SK-N-SH (cell line): ENCODE measurements at regions of chr14 and their contacts with region 1.

Region 1: DNA sequence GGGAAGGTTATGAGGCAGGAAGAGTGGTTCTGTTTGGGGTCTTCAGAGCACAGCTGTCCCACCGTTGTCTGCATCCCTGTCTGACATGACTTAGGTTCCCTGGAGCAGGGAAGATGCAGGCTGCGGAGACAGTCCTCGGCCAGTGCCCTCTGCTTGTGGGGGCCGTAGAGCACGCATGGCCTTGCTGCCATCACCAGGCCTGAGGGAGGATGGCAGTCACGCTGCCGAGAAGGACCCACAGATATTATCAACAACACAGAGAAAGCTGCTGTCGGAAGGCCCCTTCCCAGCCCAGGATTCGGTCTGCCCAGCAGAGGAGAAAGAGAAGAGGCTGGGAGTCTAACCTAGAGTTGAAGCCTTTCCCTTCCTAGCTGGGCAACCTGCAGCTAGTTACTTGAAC is 35.0 kb downstream of the ERH start:
- DNase-seq: peak; percentile 78
- H3K4me3 ChIP-seq: no peak overlapping the region
- H3K27ac ChIP-seq: no peak overlapping the region
- H3K4me1 ChIP-seq: peaks cover 0 to 7% of the 10 kb centered on the region in 2 experiments; a peak in 1 of 4 replicates
- H3K27me3 ChIP-seq: no peaks in the 10 kb centered on the region
- CTCF ChIP-seq: peak; percentile 54
- EP300 ChIP-seq: no peak
- RAD21 ChIP-seq: peak; percentile 84

Region 2: DNA sequence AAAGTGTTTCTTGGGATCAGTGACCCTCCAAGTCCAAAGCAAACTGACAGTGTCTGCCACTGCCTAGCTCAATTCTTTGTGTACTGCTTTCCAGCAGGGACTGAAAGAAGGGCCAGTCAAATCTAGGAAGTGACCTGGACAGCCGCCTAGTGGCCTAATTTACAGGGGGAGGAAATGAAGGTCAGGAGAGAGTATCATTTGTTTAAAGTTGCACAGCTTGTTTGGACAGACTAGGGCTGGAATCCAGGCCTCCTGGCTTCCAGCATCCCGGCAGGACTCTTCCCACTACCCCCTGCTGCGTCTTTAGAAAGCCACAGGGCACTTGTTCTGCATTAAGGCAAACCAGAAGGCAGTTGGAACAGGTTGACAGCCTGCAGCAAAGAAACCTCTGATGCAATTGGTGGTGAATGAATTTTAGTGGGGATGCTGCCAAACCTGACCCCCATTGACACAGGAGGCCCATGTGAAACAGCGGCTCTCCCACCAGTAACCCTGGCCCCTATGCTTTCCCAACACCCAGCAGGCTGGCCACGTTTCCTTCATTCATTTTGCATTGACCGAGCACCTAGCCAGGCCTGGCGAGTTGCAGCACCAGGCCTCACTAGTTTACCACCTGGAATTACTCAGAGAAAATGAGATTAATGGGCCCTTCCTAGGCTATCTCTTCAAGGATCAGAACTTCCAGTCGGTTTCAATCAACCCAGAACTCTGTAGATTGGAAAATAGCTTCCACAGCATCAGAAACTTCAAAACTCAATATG is 74.9 kb before region 1 on chr14:
- CTCF ChIA-PET with region 1: interaction called, 10 read pairs
- POLR2A ChIA-PET with region 1: no interaction called
- DNase-seq: peak; percentile 50
- H3K4me3 ChIP-seq: no peak overlapping the region
- H3K27ac ChIP-seq: peak overlapping the region in 1 of 2 experiments; percentile 54; a peak in 2 of 4 replicates
- H3K4me1 ChIP-seq: peaks cover 0 to 27% of the 10 kb centered on the region in 2 experiments; a peak in 2 of 4 replicates
- H3K27me3 ChIP-seq: no peaks in the 10 kb centered on the region
- CTCF ChIP-seq: peak; percentile 56
- EP300 ChIP-seq: peak in 1 of 2 experiments; percentile 32; a peak in 1 of 4 replicates
- RAD21 ChIP-seq: peak; percentile 46

Region 3: GRCh38 chr14:69346710-69347109 is 16.3 kb before region 1 on chr14:
- CTCF ChIA-PET with region 1: interaction called, 13 read pairs
- POLR2A ChIA-PET with region 1: interaction called, 3 read pairs
- DNase-seq: peak; percentile 56
- H3K4me3 ChIP-seq: no peak overlapping the region
- H3K27ac ChIP-seq: no peak overlapping the region
- H3K4me1 ChIP-seq: peaks cover 0 to 2% of the 10 kb centered on the region in 2 experiments; a peak in 1 of 4 replicates
- H3K27me3 ChIP-seq: no peaks in the 10 kb centered on the region
- CTCF ChIP-seq: peak; percentile 53
- EP300 ChIP-seq: no peak
- RAD21 ChIP-seq: peak; percentile 39; the same call in 1 of the 2 replicates

Region 4: DNA sequence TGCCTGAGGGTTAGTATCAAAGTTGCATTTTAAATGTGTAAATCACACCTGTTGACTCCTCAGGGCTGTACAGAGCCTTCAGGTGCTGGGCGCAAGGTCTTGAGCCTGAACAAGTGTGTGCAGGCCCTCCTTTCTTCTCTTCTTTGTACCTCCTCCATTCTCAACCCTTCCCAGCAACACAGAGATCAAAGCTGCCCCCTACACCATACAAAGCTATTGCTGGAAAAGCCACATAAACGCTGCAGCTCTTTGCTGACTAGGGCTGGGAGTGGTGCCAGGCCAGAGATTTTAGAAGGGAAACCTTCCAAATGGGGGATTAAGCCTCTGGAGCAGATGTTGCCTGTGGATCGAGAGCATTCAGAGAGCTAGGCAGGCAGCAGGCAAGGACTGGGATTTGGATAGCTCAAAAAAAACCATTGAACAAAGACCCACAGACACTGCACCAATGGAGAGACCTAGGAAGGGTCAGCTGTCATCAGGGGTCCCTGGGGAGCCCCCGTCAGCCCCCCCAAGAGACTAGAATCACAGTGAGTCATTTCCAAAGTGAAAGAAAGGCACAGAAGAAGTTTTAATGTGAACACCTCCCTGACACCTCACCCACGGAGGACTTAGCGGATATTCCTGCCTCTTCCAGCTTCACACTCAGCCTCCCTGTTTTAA is 230.1 kb after region 1 on chr14:
- CTCF ChIA-PET with region 1: no interaction called
- POLR2A ChIA-PET with region 1: no interaction called
- DNase-seq: no peak
- H3K4me3 ChIP-seq: no peak overlapping the region
- H3K27ac ChIP-seq: no peak overlapping the region
- H3K4me1 ChIP-seq: peaks cover 0 to 3% of the 10 kb centered on the region in 2 experiments; a peak in 2 of 4 replicates
- H3K27me3 ChIP-seq: no peaks in the 10 kb centered on the region
- CTCF ChIP-seq: no peak
- EP300 ChIP-seq: no peak
- RAD21 ChIP-seq: no peak

Region 5: GRCh38 chr14:69685716-69686115 is 322.7 kb after region 1 on chr14:
- CTCF ChIA-PET with region 1: no interaction called
- POLR2A ChIA-PET with region 1: no interaction called
- DNase-seq: no peak
- H3K4me3 ChIP-seq: no peak overlapping the region
- H3K27ac ChIP-seq: no peak overlapping the region
- H3K4me1 ChIP-seq: peaks cover 0 to 40% of the 10 kb centered on the region in 2 experiments; a peak in 3 of 4 replicates
- H3K27me3 ChIP-seq: no peaks in the 10 kb centered on the region
- CTCF ChIP-seq: no peak
- EP300 ChIP-seq: no peak
- RAD21 ChIP-seq: 0 out of 2 replicates have a peak, but pooled peaks have one; percentile 7

Region 6: DNA sequence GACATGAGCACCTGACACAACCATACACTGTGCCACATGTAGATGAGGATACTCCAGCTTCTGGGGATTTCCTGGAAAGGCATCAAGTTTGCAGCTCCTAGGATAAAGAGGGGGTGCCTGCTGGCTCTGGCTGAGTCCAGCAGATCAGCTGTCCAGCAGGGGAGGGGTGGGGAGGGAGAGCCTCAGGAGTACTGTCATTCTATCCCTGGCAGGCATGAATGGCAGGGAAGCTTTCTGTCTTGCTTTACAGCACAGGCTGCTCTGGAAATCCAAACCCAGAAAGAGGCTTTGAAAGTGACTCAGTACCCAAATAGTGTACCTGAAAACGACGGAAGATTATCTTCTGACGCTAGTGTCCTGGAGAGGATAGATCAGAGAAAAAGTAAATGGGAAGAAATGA is 793.5 kb after region 1 on chr14:
- CTCF ChIA-PET with region 1: no interaction called
- POLR2A ChIA-PET with region 1: no interaction called
- DNase-seq: no peak
- H3K4me3 ChIP-seq: no peak overlapping the region
- H3K27ac ChIP-seq: peak overlapping the region in 1 of 2 experiments; percentile 39; a peak in 1 of 4 replicates
- H3K4me1 ChIP-seq: peaks cover 0 to 45% of the 10 kb centered on the region in 2 experiments; a peak in 2 of 4 replicates
- H3K27me3 ChIP-seq: no peaks in the 10 kb centered on the region
- CTCF ChIP-seq: no peak
- EP300 ChIP-seq: no peak
- RAD21 ChIP-seq: no peak